ENCODE measurements at regions of chr15 and their contacts with region 1.

Region 1: DNA sequence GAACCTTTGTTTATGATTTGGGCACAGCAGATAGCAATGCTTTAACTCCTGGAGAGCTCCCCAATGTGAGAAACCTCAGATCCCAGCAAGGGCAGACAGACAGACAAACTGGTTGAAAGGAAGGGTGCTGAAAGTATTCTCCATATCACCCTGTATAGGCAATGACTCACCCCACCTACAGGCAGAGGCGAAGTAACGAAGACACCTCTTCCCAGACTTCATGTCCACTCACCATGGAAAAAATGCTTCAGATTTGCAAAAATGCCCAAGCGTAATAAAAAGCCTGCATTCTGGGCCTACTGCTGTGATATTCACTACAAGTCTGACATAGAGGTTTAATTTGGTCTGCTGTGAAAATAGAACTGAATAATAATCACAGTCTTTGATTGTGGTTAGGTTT is 50.5 kb downstream of the THBS1 start:
- DNase-seq: no peak
- H3K4me3 Mint-ChIP-seq: peak overlapping the region; percentile 77
- H3K27ac Mint-ChIP-seq: peak overlapping the region; percentile 95
- H3K4me1 Mint-ChIP-seq: peaks cover 51% of the 10 kb centered on the region
- H3K27me3 Mint-ChIP-seq: no peaks in the 10 kb centered on the region

Region 2: GRCh38 chr15:39556461-39556860 is 74.9 kb before region 1 on chr15:
- intact Hi-C with region 1: no loop called
- DNase-seq: no peak
- H3K4me3 Mint-ChIP-seq: no peak overlapping the region
- H3K27ac Mint-ChIP-seq: no peak overlapping the region
- H3K4me1 Mint-ChIP-seq: peaks cover 11% of the 10 kb centered on the region
- H3K27me3 Mint-ChIP-seq: peaks cover 10% of the 10 kb centered on the region

Region 3: DNA sequence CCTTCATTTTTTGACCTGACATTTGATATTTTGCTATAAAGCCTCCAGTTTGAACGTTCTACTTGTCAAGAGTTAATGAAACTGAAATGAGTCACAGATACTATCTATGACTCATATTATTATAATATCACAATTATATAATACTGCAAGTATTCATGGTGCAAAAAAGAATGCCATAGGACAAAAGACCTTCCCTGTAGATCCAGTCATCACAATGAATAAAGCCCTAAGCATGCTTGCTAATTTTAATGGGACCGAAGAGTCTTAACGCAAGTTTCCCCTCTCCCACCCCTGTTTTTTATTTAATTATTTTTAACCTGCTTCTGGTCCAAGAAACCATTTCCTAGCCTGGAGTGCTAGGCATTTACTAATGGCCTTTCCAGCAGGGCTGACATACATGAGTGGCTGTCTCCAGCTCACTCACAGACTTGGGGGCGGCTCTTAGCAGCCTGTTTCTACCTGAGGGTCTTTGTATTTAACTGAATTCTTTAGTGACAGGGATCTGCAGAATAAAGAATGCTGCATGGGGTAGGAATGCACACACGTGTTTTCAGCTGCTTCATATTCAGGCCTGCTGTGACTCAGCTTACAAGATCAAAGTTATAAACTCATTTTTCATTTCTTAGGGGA is 10.8 kb after region 1 on chr15:
- intact Hi-C with region 1: loop called (anchors 1 kb)
- DNase-seq: no peak
- H3K4me3 Mint-ChIP-seq: no peak overlapping the region
- H3K27ac Mint-ChIP-seq: no peak overlapping the region
- H3K4me1 Mint-ChIP-seq: peaks cover 33% of the 10 kb centered on the region
- H3K27me3 Mint-ChIP-seq: peaks cover 10% of the 10 kb centered on the region